ENCODE measurements at regions of chr12 and their contacts with region 1.

Region 1: GRCh38 chr12:50074936-50075807 is 10.0 kb upstream of the SMARCD1 start:
- ATAC-seq: peak; percentile 82 to 94 (median 94)
- H3K4me3 ChIP-seq: no peak overlapping the region
- H3K27ac ChIP-seq: no peak overlapping the region
- H3K4me1 ChIP-seq: peaks cover 2 to 3% of the 10 kb centered on the region in 2 donors

Region 2: GRCh38 chr12:49866859-49867579 is 208.2 kb before region 1 on chr12:
- in situ Hi-C with region 1: loop called in 1 of 9 experiments (anchors 25 kb)
- ATAC-seq: peak; percentile 7 to 70 (median 40)
- H3K4me3 ChIP-seq: no peak overlapping the region
- H3K27ac ChIP-seq: no peak overlapping the region
- H3K4me1 ChIP-seq: peaks cover 0 to 4% of the 10 kb centered on the region in 2 donors

Region 3: DNA sequence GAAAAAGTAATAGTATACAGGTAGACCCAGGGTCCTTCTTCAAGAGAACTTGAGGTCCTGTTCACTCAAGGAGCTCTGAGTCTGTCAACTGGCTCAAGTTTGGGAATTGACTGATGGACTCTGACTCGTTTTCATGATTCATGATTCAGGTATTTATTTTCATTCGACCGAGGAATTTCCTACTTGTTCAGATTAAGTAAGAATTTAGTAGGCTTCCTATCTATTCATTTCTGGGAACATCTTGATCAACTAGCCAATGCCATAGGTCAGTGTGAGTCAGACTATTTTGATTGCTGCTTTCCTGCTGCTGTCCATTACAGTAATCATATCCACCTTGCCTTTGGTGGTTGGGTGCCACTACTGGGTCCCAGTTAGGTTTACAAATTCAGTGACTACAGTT is 315.1 kb after region 1 on chr12:
- in situ Hi-C with region 1: no loop called
- ATAC-seq: peak in 2 of 8 experiments; percentile 68 to 84
- H3K4me3 ChIP-seq: no peak overlapping the region
- H3K27ac ChIP-seq: no peak overlapping the region
- H3K4me1 ChIP-seq: peaks cover 0 to 10% of the 10 kb centered on the region in 2 donors